ENCODE measurements at regions of chr15 and their contacts with region 1.

Region 1: DNA sequence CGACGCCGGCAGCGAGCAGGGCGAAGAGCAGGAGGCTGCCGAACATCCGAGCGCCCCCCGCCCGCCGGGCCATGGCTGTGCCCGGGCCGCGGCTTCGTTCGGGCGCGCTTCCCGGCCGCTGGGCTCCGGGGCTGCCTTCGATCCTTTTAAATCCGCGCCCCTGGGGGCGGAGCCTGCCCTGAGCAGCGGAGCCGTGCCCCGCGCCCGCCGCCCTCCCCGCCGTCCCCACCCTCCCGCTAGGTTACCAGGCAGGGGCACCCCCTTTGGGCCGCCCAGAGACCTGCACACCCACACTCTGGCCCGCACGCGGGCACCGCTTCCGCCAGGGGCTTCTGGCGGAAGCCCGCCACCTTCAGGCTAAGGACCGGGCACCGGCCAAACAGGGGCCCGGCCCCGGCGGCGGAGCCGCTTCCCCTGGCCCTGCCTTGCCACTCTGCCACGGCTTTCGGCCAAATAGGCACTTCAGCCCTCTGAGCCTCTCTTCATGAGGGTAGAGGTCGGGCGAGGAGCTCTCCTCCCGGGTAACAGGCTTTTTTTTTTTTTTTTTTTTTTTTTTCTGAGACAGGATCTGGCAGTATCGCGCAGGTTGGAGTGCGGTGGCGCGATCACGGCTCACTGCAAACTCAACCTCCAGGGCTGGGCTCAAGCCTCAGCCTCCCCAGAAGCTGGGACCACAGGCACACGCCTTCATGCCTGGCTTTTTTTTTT is at the start of gene NMB:
- DNase-seq: peak; percentile 33
- ATAC-seq: peak; percentile 81
- H3K4me3 ChIP-seq: peak within 1 kb of the TSS; percentile 49; the same call in 1 of the 2 replicates
- H3K27ac ChIP-seq: no peak within 1 kb of the TSS
- H3K4me1 ChIP-seq: peaks cover 19% of the 10 kb centered on the region
- H3K27me3 ChIP-seq: no peaks in the 10 kb centered on the region
- CTCF ChIP-seq: peak; percentile 56 to 66 (median 61)
- EP300 ChIP-seq: no peak
- POLR2A ChIP-seq: no peak
- RAD21 ChIP-seq: peak; percentile 29; the same call in 1 of the 2 replicates
- polyA plus RNA-seq, gene NMB: 0.32 to 0.91 TPM

Region 2: GRCh38 chr15:84616235-84616634 is 42.0 kb before region 1 on chr15:
- CTCF ChIA-PET with region 1: no interaction called
- POLR2A ChIA-PET with region 1: no interaction called
- RAD21 ChIA-PET with region 1: no interaction called
- SMC1A ChIA-PET with region 1: no interaction called
- in situ Hi-C with region 1: no loop called
- intact Hi-C with region 1: no loop called
- DNase-seq: no peak
- ATAC-seq: no peak
- H3K4me3 ChIP-seq: no peak overlapping the region
- H3K27ac ChIP-seq: no peak overlapping the region
- H3K4me1 ChIP-seq: no peaks in the 10 kb centered on the region
- H3K27me3 ChIP-seq: no peaks in the 10 kb centered on the region
- CTCF ChIP-seq: no peak
- EP300 ChIP-seq: no peak
- POLR2A ChIP-seq: no peak
- RAD21 ChIP-seq: no peak

Region 3: GRCh38 chr15:84633311-84634227 is 24.7 kb before region 1 on chr15:
- CTCF ChIA-PET with region 1: interaction called, 18 read pairs
- POLR2A ChIA-PET with region 1: interaction called, 5 read pairs
- RAD21 ChIA-PET with region 1: interaction called, 6 read pairs
- SMC1A ChIA-PET with region 1: interaction called, 4 read pairs
- in situ Hi-C with region 1: no loop called
- intact Hi-C with region 1: no loop called
- DNase-seq: no peak
- ATAC-seq: peak; percentile 67
- H3K4me3 ChIP-seq: peak overlapping the region; percentile 65
- H3K27ac ChIP-seq: peak overlapping the region; percentile 5; the same call in 1 of the 2 replicates
- H3K4me1 ChIP-seq: peaks cover 9% of the 10 kb centered on the region
- H3K27me3 ChIP-seq: no peaks in the 10 kb centered on the region
- CTCF ChIP-seq: no peak
- EP300 ChIP-seq: no peak
- POLR2A ChIP-seq: peak; percentile 54
- RAD21 ChIP-seq: no peak

Region 4: GRCh38 chr15:84748274-84749110 is 90.3 kb after region 1 on chr15 and contains the start of gene ZNF592:
- CTCF ChIA-PET with region 1: interaction called, 9 read pairs
- POLR2A ChIA-PET with region 1: interaction called, 5 read pairs
- RAD21 ChIA-PET with region 1: interaction called, 5 read pairs
- SMC1A ChIA-PET with region 1: interaction called, 4 read pairs
- in situ Hi-C with region 1: no loop called
- intact Hi-C with region 1: loop called (anchors 1 kb)
- DNase-seq: no peak
- ATAC-seq: peak; percentile 51
- H3K4me3 ChIP-seq: peak within 1 kb of the TSS; percentile 84
- H3K27ac ChIP-seq: peak within 1 kb of the TSS; percentile 90
- H3K4me1 ChIP-seq: peaks cover 15% of the 10 kb centered on the region
- H3K27me3 ChIP-seq: no peaks in the 10 kb centered on the region
- CTCF ChIP-seq: peak in 2 of 3 experiments; percentile 25; a peak in 3 of 6 replicates
- EP300 ChIP-seq: no peak
- POLR2A ChIP-seq: peak; percentile 50
- RAD21 ChIP-seq: no peak
- polyA plus RNA-seq, gene ZNF592: 0.95 to 1.3 TPM

Region 5: DNA sequence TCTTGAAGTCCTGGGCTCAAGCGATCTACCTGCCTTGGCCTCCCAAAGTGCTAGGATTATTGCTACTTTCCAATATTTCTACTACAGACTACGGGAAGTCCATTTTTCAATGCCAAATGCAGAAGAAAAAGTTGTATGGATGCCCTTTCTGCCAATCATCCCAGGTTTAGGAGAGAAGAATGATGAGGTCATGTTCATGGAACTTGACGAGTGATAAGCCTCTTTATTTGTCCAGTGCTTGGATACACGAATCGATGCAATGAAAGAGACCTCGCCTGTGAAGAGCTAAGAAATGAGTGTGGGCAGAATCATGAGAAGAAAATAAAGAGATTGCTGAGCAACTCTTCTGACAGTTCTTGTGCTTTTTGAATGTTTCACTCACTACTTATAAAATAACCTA is 225.2 kb after region 1 on chr15:
- CTCF ChIA-PET with region 1: interaction called, 5 read pairs
- POLR2A ChIA-PET with region 1: no interaction called
- RAD21 ChIA-PET with region 1: interaction called, 8 read pairs
- SMC1A ChIA-PET with region 1: interaction called, 6 read pairs
- in situ Hi-C with region 1: no loop called
- intact Hi-C with region 1: loop called (anchors 1 kb)
- DNase-seq: no peak
- ATAC-seq: no peak
- H3K4me3 ChIP-seq: no peak overlapping the region
- H3K27ac ChIP-seq: no peak overlapping the region
- H3K4me1 ChIP-seq: peaks cover 3% of the 10 kb centered on the region; the same call in 1 of the 2 replicates
- H3K27me3 ChIP-seq: 0 out of 4 replicates have a peak, but pooled peaks cover 0 to 2% of the 10 kb centered on the region in 2 experiments
- CTCF ChIP-seq: no peak
- EP300 ChIP-seq: no peak
- POLR2A ChIP-seq: no peak
- RAD21 ChIP-seq: no peak